ENCODE measurements at regions of chr2 and their contacts with region 1.

Region 1: GRCh38 chr2:175880-176800 is 87.7 kb downstream of the SH3YL1 start:
- DNase-seq: peak in 7 of 9 donors; percentile 52 to 81 (median 77)
- ATAC-seq: peak; percentile 98
- H3K4me3 ChIP-seq: peak overlapping the region; percentile 40
- H3K4me3 Mint-ChIP-seq: peak overlapping the region; percentile 65 to 79 (median 74)
- H3K27ac ChIP-seq: peak overlapping the region; percentile 60
- H3K27ac Mint-ChIP-seq: peak overlapping the region; percentile 54 to 98 (median 87)
- H3K4me1 ChIP-seq: peaks cover 33 to 35% of the 10 kb centered on the region in 2 donors
- H3K4me1 Mint-ChIP-seq: peaks cover 22 to 55% (median 48%) of the 10 kb centered on the region in 7 donors
- H3K27me3 ChIP-seq: no peaks in the 10 kb centered on the region
- H3K27me3 Mint-ChIP-seq: peaks cover 0 to 30% (median 0%) of the 10 kb centered on the region in 5 donors

Region 2: GRCh38 chr2:90645-91312 is 85.4 kb before region 1 on chr2:
- CTCF ChIA-PET with region 1: no interaction called
- POLR2A ChIA-PET with region 1: no interaction called
- intact Hi-C with region 1: no loop called
- DNase-seq: no peak
- ATAC-seq: no peak
- H3K4me3 ChIP-seq: no peak overlapping the region
- H3K4me3 Mint-ChIP-seq: no peak overlapping the region
- H3K27ac ChIP-seq: no peak overlapping the region
- H3K27ac Mint-ChIP-seq: no peak overlapping the region
- H3K4me1 ChIP-seq: no peaks in the 10 kb centered on the region
- H3K4me1 Mint-ChIP-seq: no peaks in the 10 kb centered on the region
- H3K27me3 ChIP-seq: no peaks in the 10 kb centered on the region
- H3K27me3 Mint-ChIP-seq: peaks cover 0 to 25% (median 12%) of the 10 kb centered on the region in 5 donors

Region 3: GRCh38 chr2:187825-188224 is 11.7 kb after region 1 on chr2:
- CTCF ChIA-PET with region 1: interaction called, 4 read pairs
- POLR2A ChIA-PET with region 1: interaction called, 12 read pairs
- intact Hi-C with region 1: no loop called
- DNase-seq: no peak
- ATAC-seq: no peak
- H3K4me3 ChIP-seq: no peak overlapping the region
- H3K4me3 Mint-ChIP-seq: no peak overlapping the region
- H3K27ac ChIP-seq: no peak overlapping the region
- H3K27ac Mint-ChIP-seq: no peak overlapping the region
- H3K4me1 ChIP-seq: peaks cover 3 to 7% of the 10 kb centered on the region in 2 donors
- H3K4me1 Mint-ChIP-seq: peaks cover 0 to 25% (median 20%) of the 10 kb centered on the region in 7 donors
- H3K27me3 ChIP-seq: no peaks in the 10 kb centered on the region
- H3K27me3 Mint-ChIP-seq: no peaks in the 10 kb centered on the region

Region 4: DNA sequence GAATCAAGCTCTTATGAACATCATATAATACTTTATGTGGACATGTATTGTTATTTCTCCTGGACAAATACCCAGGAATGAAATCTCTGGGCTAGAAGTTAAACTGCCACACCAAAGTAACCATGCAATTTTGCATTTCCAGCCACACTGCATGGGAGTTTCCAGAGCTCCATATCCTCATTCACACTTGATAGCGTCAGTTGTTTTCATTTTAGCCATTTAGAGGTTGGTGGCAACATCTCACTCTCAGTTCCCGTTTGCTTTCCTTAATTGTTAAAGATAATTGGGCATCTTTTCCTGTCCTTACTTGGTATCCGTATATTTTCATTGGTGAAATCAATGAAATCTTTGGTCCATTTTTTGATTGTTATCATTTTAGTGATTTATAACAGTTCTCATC is 39.9 kb after region 1 on chr2:
- CTCF ChIA-PET with region 1: no interaction called
- POLR2A ChIA-PET with region 1: interaction called, 3 read pairs
- intact Hi-C with region 1: loop called in 1 of 2 experiments (anchors 5 kb)
- DNase-seq: no peak
- ATAC-seq: no peak
- H3K4me3 ChIP-seq: no peak overlapping the region
- H3K4me3 Mint-ChIP-seq: no peak overlapping the region
- H3K27ac ChIP-seq: no peak overlapping the region
- H3K27ac Mint-ChIP-seq: peak overlapping the region in 1 of 9 donors; percentile 32
- H3K4me1 ChIP-seq: no peaks in the 10 kb centered on the region
- H3K4me1 Mint-ChIP-seq: no peaks in the 10 kb centered on the region
- H3K27me3 ChIP-seq: no peaks in the 10 kb centered on the region
- H3K27me3 Mint-ChIP-seq: peaks cover 0 to 11% (median 5%) of the 10 kb centered on the region in 5 donors

Region 5: GRCh38 chr2:264660-265468 is 88.7 kb after region 1 on chr2 and contains the start of gene ACP1:
- CTCF ChIA-PET with region 1: no interaction called
- POLR2A ChIA-PET with region 1: interaction called, 12 read pairs
- intact Hi-C with region 1: loop called in 1 of 2 experiments (anchors 1 kb)
- DNase-seq: peak; percentile 93 to 99 (median 96)
- ATAC-seq: peak; percentile 89
- H3K4me3 ChIP-seq: peak within 1 kb of the TSS; percentile 90
- H3K4me3 Mint-ChIP-seq: peak within 1 kb of the TSS; percentile 81 to 98 (median 94)
- H3K27ac ChIP-seq: peak within 1 kb of the TSS; percentile 87
- H3K27ac Mint-ChIP-seq: peak within 1 kb of the TSS; percentile 84 to 98 (median 96)
- H3K4me1 ChIP-seq: peaks cover 21 to 26% of the 10 kb centered on the region in 2 donors
- H3K4me1 Mint-ChIP-seq: peaks cover 24 to 80% (median 54%) of the 10 kb centered on the region in 7 donors
- H3K27me3 ChIP-seq: no peaks in the 10 kb centered on the region
- H3K27me3 Mint-ChIP-seq: no peaks in the 10 kb centered on the region
- total RNA-seq, gene ACP1: 61.1 to 92.7 (median 86.1) TPM

Region 6: DNA sequence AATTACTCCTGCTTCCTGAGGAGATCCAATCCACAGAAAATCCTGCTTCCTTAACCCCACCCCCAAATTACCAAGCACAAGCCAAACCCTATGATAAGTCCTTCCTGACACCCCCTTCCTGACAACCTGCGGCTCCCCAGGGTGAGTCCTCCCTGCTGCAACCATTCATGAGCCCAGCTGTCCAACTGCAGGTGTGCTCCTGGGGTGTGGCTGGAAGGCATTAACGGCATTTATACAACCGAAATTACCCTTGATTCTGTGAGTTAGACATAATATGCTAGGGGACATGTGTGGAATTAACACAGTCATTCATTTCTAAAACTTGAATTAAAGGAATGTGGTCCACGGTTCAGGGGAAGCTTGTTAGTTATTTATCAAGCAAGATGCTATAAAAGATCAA is 230.7 kb after region 1 on chr2:
- CTCF ChIA-PET with region 1: no interaction called
- POLR2A ChIA-PET with region 1: no interaction called
- intact Hi-C with region 1: no loop called
- DNase-seq: no peak
- ATAC-seq: no peak
- H3K4me3 ChIP-seq: no peak overlapping the region
- H3K4me3 Mint-ChIP-seq: no peak overlapping the region
- H3K27ac ChIP-seq: no peak overlapping the region
- H3K27ac Mint-ChIP-seq: no peak overlapping the region
- H3K4me1 ChIP-seq: no peaks in the 10 kb centered on the region
- H3K4me1 Mint-ChIP-seq: peaks cover 0 to 1% (median 0%) of the 10 kb centered on the region in 7 donors
- H3K27me3 ChIP-seq: no peaks in the 10 kb centered on the region
- H3K27me3 Mint-ChIP-seq: peaks cover 0 to 21% (median 0%) of the 10 kb centered on the region in 5 donors

Region 7: DNA sequence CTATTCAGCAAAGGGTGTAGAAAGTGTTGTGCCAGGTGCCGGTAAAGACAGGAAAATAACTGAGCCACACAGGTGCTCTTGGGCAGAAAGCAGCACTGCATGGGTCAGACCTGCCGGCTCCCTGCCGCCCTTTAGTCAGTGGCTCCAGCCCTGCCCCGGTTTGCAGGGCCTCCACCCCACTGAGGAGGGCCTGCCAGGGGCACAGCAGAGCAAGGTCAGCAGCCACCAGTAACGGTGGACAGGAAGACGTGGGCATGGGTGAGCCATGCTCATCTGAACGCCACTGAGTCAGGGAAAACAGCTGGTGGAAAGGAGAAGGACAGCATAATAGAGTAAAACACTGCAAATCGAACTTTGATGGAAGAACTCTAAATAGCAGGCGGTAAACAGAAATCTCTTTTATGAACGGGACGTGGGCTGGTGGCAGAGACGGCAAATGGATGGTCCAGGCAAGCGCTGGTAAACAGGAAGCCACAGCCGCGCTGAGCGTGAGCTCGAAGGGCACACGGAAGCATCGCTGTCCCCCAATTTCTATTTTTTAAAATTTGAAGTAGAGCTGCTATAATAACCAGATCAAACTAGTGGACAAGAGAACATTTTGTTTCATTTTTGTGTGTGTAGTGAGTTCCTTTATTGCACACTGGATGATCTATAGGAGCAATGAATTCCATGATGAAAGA is 253.6 kb after region 1 on chr2:
- CTCF ChIA-PET with region 1: no interaction called
- POLR2A ChIA-PET with region 1: no interaction called
- intact Hi-C with region 1: loop called in 1 of 2 experiments (anchors 5 kb)
- DNase-seq: peak in 4 of 9 donors; percentile 7 to 28 (median 16)
- ATAC-seq: peak; percentile 72
- H3K4me3 ChIP-seq: peak overlapping the region; percentile 56
- H3K4me3 Mint-ChIP-seq: peak overlapping the region; percentile 49 to 91 (median 80)
- H3K27ac ChIP-seq: peak overlapping the region; percentile 46
- H3K27ac Mint-ChIP-seq: peak overlapping the region; percentile 57 to 96 (median 83)
- H3K4me1 ChIP-seq: peaks cover 19% of the 10 kb centered on the region in 2 donors
- H3K4me1 Mint-ChIP-seq: peaks cover 19 to 36% (median 24%) of the 10 kb centered on the region in 7 donors
- H3K27me3 ChIP-seq: no peaks in the 10 kb centered on the region
- H3K27me3 Mint-ChIP-seq: peaks cover 0 to 4% (median 2%) of the 10 kb centered on the region in 5 donors

Region 8: GRCh38 chr2:677056-677965 is 501.2 kb after region 1 on chr2 and contains the start of gene TMEM18:
- CTCF ChIA-PET with region 1: no interaction called
- POLR2A ChIA-PET with region 1: interaction called, 4 read pairs
- intact Hi-C with region 1: loop called in 1 of 2 experiments (anchors 5 kb)
- DNase-seq: peak in 8 of 9 donors; percentile 97 to 100 (median 99)
- ATAC-seq: peak; percentile 93
- H3K4me3 ChIP-seq: peak within 1 kb of the TSS; percentile 95
- H3K4me3 Mint-ChIP-seq: peak within 1 kb of the TSS; percentile 93 to 100 (median 98)
- H3K27ac ChIP-seq: peak within 1 kb of the TSS; percentile 100
- H3K27ac Mint-ChIP-seq: peak within 1 kb of the TSS; percentile 95 to 100 (median 99)
- H3K4me1 ChIP-seq: peaks cover 0 to 4% of the 10 kb centered on the region in 2 donors
- H3K4me1 Mint-ChIP-seq: peaks cover 23 to 49% (median 40%) of the 10 kb centered on the region in 7 donors
- H3K27me3 ChIP-seq: no peaks in the 10 kb centered on the region
- H3K27me3 Mint-ChIP-seq: no peaks in the 10 kb centered on the region
- total RNA-seq, gene TMEM18: 23.3 to 39.8 (median 33.2) TPM

Region 9: DNA sequence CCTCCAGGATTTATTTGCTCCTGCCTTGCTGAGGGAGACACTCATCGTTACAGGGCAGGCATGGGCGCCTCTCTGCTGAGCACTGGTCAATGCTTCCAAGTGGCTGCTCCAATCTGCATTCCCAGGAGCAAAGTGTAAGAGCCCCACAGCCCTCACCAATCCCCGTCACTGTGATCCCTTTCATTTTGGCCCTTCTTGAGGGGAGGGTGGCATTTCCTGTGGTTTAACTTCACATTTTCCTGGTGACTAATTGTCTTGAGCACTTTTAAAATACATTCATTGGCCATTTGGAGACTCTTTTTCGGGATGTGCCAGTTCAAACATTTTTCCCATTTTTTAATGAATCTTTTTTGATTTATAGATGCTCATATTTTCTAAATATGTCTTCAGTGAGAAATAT is 1270.2 kb after region 1 on chr2:
- CTCF ChIA-PET with region 1: no interaction called
- POLR2A ChIA-PET with region 1: no interaction called
- intact Hi-C with region 1: no loop called
- DNase-seq: no peak
- ATAC-seq: no peak
- H3K4me3 ChIP-seq: no peak overlapping the region
- H3K4me3 Mint-ChIP-seq: no peak overlapping the region
- H3K27ac ChIP-seq: no peak overlapping the region
- H3K27ac Mint-ChIP-seq: no peak overlapping the region
- H3K4me1 ChIP-seq: no peaks in the 10 kb centered on the region
- H3K4me1 Mint-ChIP-seq: no peaks in the 10 kb centered on the region
- H3K27me3 ChIP-seq: no peaks in the 10 kb centered on the region
- H3K27me3 Mint-ChIP-seq: peaks cover 0 to 23% (median 10%) of the 10 kb centered on the region in 5 donors

Measured in naive thymus-derived CD4-positive, alpha-beta T cell (primary cell).